ENCODE measurements at regions of chr12 and their contacts with region 1.

Region 1: GRCh38 chr12:46187023-46187422 is 81.8 kb downstream of the SLC38A1 start:
- DNase-seq: no peak
- H3K4me3 ChIP-seq: no peak overlapping the region
- H3K4me3 Mint-ChIP-seq: no peak overlapping the region
- H3K27ac Mint-ChIP-seq: peak overlapping the region; percentile 41
- H3K4me1 ChIP-seq: no peaks in the 10 kb centered on the region
- H3K4me1 Mint-ChIP-seq: no peaks in the 10 kb centered on the region
- H3K27me3 ChIP-seq: no peaks in the 10 kb centered on the region
- H3K27me3 Mint-ChIP-seq: no peaks in the 10 kb centered on the region
- CTCF ChIP-seq: no peak

Region 2: DNA sequence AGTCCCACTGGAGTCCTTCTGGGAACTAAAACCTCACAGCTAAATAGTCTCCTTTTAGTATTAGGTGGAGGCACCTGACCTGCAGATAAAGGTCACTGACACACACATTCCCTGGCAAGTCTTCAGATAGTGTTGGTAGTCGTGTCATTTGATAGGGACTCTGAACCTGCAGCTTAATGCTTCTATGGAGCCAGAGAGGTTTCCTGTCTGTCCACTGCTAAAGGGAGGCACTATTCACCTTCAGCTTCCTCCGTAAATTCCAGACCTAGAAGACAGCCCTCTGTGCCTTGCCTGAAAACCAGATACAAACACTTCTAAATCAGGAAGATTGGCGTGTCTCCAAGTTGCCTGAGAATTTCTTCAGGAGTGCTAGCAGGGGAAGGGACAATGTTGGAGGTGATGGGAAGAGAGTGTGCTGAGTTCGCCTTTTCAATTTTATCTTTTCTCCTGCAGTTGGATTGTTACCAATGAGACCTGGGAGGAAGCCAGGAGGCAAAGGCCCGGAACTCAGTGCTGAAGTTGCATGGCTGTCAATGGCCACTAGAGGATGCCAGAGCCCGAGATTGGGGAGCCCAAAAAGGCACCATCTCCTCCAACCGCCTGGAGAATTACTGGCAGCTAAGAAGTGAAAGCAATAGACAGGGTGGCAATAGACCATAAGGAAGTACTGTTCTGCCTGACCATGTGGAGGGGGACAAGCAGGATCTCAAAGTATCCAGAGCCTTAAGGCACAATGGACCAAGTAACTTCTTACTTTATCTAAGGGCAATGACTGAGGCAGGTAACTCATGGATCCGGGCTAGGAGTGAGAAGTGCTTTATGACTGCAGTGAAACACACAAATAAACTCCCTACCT is 115.0 kb before region 1 on chr12:
- CTCF ChIA-PET with region 1: no interaction called
- POLR2A ChIA-PET with region 1: no interaction called
- intact Hi-C with region 1: loop called (anchors 10 kb)
- DNase-seq: peak; percentile 68 to 72
- H3K4me3 ChIP-seq: no peak overlapping the region
- H3K4me3 Mint-ChIP-seq: no peak overlapping the region
- H3K27ac Mint-ChIP-seq: no peak overlapping the region
- H3K4me1 ChIP-seq: no peaks in the 10 kb centered on the region
- H3K4me1 Mint-ChIP-seq: peaks cover 6% of the 10 kb centered on the region
- H3K27me3 ChIP-seq: no peaks in the 10 kb centered on the region; the same call in 1 of the 2 replicates
- H3K27me3 Mint-ChIP-seq: peaks cover 2% of the 10 kb centered on the region
- CTCF ChIP-seq: peak; percentile 92 to 96